Activated naive CD4-positive, alpha-beta T cell treated with anti-CD3 and anti-CD28 coated beads, Interleukin-2, amount 10 ng/mL, durations not matched to agents 7 days and 5 days (primary cell): ENCODE measurements at regions of chr1 and their contacts with region 1.

Region 1: DNA sequence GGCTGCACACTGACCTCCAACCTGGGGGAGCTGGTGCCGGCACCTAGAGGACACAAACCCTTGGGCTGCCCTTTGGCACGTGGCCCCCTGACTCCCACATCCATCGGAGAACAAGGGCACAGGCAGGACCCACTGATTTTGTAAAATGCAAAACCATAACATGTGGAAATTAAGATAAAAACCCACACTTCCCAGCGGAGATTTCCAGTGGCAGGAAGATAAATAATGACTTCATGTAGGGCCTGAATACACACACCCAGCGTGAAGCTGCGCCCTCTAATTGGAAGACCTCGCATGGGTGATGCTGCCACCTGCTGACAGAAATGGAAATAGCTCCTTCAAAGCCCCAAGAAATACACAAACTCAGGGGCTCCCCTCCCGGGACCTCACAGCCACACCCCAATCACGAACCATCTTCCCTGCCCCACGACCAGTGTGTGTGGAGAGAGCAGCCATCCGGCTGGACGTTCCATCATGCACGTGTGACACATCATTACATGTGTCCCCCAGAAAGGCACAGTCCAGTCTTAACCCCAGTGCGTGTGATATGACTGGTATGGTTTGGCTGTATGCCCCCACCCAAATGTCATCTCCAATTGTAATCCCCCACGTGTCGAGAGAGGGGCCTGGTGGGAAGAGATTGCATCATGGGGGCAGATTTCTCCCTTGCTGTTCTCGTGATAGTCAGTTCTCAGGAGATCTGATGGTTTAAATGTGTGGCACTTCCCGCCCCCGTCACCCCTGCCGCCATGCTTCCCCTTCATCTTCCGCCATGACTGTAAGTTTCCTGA is 5.7 kb upstream of the TPRG1L start:
- DNase-seq: peak; percentile 83
- H3K4me3 Mint-ChIP-seq: no peak overlapping the region
- H3K27ac Mint-ChIP-seq: no peak overlapping the region
- H3K4me1 Mint-ChIP-seq: peaks cover 17% of the 10 kb centered on the region
- H3K27me3 Mint-ChIP-seq: peaks cover 38% of the 10 kb centered on the region

Region 2: DNA sequence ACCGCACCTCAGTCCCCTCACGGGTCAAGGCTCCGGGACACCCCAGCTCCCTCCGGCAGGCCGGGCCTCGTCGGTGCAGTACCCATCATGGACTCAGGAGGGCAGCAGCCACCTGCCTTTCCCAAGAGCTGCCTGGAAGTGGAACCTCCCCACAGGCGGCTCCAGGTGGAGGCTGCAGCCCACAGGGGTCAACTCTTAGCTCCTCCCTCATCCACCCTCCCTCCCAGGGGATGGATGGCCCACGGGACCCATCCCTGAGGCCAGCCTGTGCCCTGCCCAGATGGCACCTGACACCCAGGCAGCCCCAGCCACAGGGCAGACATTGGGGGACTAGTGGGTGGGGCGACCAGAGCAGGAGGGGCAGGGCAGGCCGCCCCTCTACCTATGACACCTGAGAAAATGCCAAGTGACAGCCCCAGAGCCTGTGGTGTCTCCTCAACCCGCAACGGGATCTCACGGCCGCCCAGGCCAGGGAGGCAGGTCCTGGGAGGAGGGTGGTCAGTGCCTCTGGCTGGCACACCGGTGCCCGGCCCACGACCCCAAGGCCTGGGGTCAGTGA is 165.8 kb before region 1 on chr1:
- CTCF ChIA-PET with region 1: interaction called, 15 read pairs
- DNase-seq: peak; percentile 80
- H3K4me3 Mint-ChIP-seq: peak overlapping the region; percentile 40
- H3K27ac Mint-ChIP-seq: no peak overlapping the region
- H3K4me1 Mint-ChIP-seq: peaks cover 2% of the 10 kb centered on the region
- H3K27me3 Mint-ChIP-seq: peaks cover 59% of the 10 kb centered on the region

Region 3: GRCh38 chr1:3491291-3492246 is 127.5 kb before region 1 on chr1:
- CTCF ChIA-PET with region 1: interaction called, 12 read pairs
- DNase-seq: peak; percentile 89
- H3K4me3 Mint-ChIP-seq: peak overlapping the region; percentile 26
- H3K27ac Mint-ChIP-seq: no peak overlapping the region
- H3K4me1 Mint-ChIP-seq: peaks cover 3% of the 10 kb centered on the region
- H3K27me3 Mint-ChIP-seq: no peaks in the 10 kb centered on the region

Region 4: GRCh38 chr1:3564921-3565827 is 53.9 kb before region 1 on chr1:
- CTCF ChIA-PET with region 1: interaction called, 38 read pairs
- DNase-seq: peak; percentile 48
- H3K4me3 Mint-ChIP-seq: no peak overlapping the region
- H3K27ac Mint-ChIP-seq: no peak overlapping the region
- H3K4me1 Mint-ChIP-seq: no peaks in the 10 kb centered on the region
- H3K27me3 Mint-ChIP-seq: no peaks in the 10 kb centered on the region

Region 5: GRCh38 chr1:3725366-3725765 is 106.3 kb after region 1 on chr1:
- CTCF ChIA-PET with region 1: interaction called, 10 read pairs
- DNase-seq: no peak
- H3K4me3 Mint-ChIP-seq: no peak overlapping the region
- H3K27ac Mint-ChIP-seq: no peak overlapping the region
- H3K4me1 Mint-ChIP-seq: peaks cover 3% of the 10 kb centered on the region
- H3K27me3 Mint-ChIP-seq: peaks cover 12% of the 10 kb centered on the region